ENCODE measurements at regions of chr1 and their contacts with region 1.

Region 1: DNA sequence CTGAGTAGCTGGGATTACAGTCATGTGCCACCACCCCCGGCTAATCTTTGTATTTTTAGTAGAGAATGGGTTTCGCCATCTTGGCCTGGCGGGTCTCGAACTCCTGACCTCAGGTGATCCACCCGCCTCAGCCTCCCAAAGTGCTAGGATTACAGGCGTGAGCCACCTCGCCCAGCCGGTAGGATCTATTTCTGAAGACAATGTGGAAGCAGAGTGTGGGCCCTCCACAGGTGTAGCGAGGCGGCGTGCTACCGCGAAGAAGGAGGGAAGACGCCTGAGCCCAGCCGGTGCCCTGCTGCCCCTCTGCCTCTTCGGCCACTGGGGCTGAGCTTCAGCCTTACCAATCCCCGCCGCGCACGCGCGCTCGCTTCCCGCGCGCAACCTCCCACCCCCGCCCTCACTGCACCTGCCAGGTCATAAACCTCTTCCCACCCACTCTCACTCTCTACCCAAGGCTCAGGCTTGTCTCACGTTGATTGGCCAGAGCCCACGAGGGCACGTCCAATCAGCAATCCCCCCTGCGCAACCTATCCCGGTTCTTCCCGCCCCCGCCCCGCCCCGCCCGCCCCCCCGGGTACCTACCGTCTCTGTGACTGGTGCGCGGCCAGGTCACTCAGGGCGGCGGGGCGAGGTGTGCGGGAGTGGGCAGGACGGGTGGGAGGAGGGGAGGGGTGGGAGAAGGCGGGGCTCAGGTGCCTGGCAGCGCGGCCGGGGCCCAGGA is 409 bp upstream of the HOOK1 start:
- DNase-seq: peak; percentile 92
- H3K4me3 Mint-ChIP-seq: peak overlapping the region; percentile 80
- H3K27ac Mint-ChIP-seq: peak overlapping the region; percentile 75
- H3K4me1 Mint-ChIP-seq: peaks cover 7% of the 10 kb centered on the region
- H3K27me3 Mint-ChIP-seq: peaks cover 5% of the 10 kb centered on the region

Region 2: DNA sequence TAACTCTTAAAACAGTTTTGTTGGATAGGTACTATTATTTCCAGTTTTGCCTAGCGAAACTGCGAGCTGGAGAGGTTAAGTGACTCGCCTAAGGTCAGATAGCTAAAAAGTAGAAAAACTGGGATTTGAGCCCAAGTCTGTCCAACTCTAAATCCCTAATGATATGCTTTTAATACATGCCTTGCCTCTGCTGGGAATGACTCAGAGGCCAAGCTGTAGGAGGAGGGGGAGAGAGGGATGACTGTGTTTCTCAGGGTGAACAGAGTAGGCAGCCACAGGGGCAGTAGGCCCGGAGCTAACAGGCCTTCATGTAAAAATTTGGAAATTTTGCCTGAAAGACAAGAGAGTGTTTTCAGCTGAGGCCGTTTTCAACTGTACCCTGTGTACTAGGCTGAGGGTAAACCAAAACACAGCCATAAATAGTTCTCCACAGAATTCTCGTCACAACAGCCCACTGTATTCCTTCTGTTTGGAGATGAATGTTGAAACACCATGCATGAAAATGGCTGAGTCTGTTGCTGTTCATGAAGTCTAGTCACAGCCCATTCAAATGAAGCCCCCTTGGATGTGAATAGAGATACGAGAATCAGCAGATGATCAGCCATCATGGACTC is 107.1 kb before region 1 on chr1:
- CTCF ChIA-PET with region 1: no interaction called
- POLR2A ChIA-PET with region 1: no interaction called
- intact Hi-C with region 1: no loop called
- DNase-seq: no peak
- H3K4me3 Mint-ChIP-seq: no peak overlapping the region
- H3K27ac Mint-ChIP-seq: no peak overlapping the region
- H3K4me1 Mint-ChIP-seq: no peaks in the 10 kb centered on the region
- H3K27me3 Mint-ChIP-seq: no peaks in the 10 kb centered on the region

Region 3: GRCh38 chr1:59926381-59927123 is 112.2 kb after region 1 on chr1 and contains the start of gene CYP2J2:
- CTCF ChIA-PET with region 1: no interaction called
- POLR2A ChIA-PET with region 1: no interaction called
- intact Hi-C with region 1: loop called (anchors 10 kb)
- DNase-seq: peak; percentile 58
- H3K4me3 Mint-ChIP-seq: peak within 1 kb of the TSS; percentile 76
- H3K27ac Mint-ChIP-seq: no peak within 1 kb of the TSS
- H3K4me1 Mint-ChIP-seq: peaks cover 10% of the 10 kb centered on the region
- H3K27me3 Mint-ChIP-seq: peaks cover 31% of the 10 kb centered on the region
- total RNA-seq, gene CYP2J2: 0.57 to 0.68 TPM